Cardiac septum (tissue), 1 donor: ENCODE measurements at regions of chr20 and their contacts with region 1.

Region 1: GRCh38 chr20:1802385-1803060 is 92.7 kb upstream of the SIRPA start:
- DNase-seq: peak; percentile 92

Region 2: GRCh38 chr20:1588533-1589460 is 213.7 kb before region 1 on chr20:
- intact Hi-C with region 1: no loop called
- DNase-seq: no peak

Region 3: GRCh38 chr20:1830240-1830639 is 27.7 kb after region 1 on chr20:
- intact Hi-C with region 1: loop called (anchors 2 kb)
- DNase-seq: peak; percentile 87

Region 4: GRCh38 chr20:1894951-1895673 is 92.6 kb after region 1 on chr20 and contains the start of gene SIRPA:
- intact Hi-C with region 1: loop called (anchors 2 kb)
- DNase-seq: peak; percentile 88
- total RNA-seq, gene SIRPA: 45.8 TPM

Region 5: GRCh38 chr20:1918491-1919165 is 116.1 kb after region 1 on chr20:
- intact Hi-C with region 1: loop called (anchors 5 kb)
- DNase-seq: no peak